ENCODE measurements at regions of chr1 and their contacts with region 1.

Region 1: DNA sequence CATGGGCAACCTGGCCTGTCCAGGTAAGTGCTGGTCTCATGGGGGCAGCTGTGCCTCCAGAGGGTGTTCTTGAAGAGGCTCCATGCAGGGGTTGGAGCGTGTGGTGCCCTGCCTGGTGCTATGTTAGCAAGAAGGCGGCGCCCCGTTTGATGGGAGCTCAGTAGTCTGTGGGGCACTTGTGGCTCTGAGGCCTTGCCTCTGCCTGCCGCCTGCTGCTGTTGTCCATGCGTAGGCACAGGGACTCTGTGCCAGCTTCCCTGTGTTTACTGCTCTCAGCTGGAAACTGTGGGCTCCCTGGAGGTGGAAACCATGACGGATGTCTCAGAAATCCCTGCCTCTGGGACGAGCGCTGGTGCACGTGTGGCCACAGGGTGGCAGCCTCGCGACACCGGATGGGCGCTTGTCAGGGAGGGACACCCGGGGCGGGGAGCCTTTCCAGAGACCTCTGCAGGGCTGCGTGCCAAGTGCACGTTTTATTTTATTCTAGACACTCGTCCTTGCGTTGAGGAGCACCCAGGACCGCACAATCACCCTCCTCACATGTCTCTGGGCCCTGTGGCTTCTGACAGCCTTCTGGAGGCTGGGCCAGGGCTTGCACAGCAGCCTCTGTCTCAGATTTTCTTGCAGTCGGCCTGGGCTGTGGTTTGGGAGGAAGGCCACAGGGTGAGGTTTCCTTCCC is 27.1 kb downstream of the SNAP47 start:
- DNase-seq: peak; percentile 79
- ATAC-seq: peak; percentile 94
- H3K4me3 ChIP-seq: no peak overlapping the region
- H3K4me3 Mint-ChIP-seq: no peak overlapping the region
- H3K27ac ChIP-seq: no peak overlapping the region
- H3K27ac Mint-ChIP-seq: no peak overlapping the region
- H3K4me1 ChIP-seq: peaks cover 3 to 23% of the 10 kb centered on the region in 2 donors
- H3K4me1 Mint-ChIP-seq: peaks cover 19% of the 10 kb centered on the region
- H3K27me3 ChIP-seq: no peaks in the 10 kb centered on the region
- H3K27me3 Mint-ChIP-seq: no peaks in the 10 kb centered on the region
- CTCF ChIP-seq: peak; percentile 89

Region 2: DNA sequence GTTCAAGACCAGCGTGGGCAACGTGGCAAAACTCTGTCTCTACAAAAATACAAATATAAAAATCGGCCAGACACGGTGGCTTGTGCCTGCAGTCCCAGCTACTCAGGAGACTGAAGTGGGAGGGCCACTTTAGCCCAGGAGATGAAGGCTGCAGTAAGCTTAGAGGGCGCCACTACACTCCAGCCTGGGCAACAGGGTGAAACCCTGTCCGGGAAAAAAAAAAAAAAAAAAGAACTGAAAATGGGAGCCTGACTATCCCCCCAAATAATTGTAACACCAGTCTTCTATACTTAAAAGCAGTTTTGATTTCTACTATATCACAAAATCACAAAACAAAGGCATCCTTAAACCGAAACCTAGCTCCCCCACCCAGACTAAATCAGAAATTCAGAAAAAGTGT is 504.4 kb before region 1 on chr1:
- CTCF ChIA-PET with region 1: no interaction called
- POLR2A ChIA-PET with region 1: no interaction called
- intact Hi-C with region 1: no loop called
- DNase-seq: no peak
- ATAC-seq: no peak
- H3K4me3 ChIP-seq: no peak overlapping the region
- H3K4me3 Mint-ChIP-seq: no peak overlapping the region
- H3K27ac ChIP-seq: no peak overlapping the region
- H3K27ac Mint-ChIP-seq: no peak overlapping the region
- H3K4me1 ChIP-seq: no peaks in the 10 kb centered on the region
- H3K4me1 Mint-ChIP-seq: no peaks in the 10 kb centered on the region
- H3K27me3 ChIP-seq: no peaks in the 10 kb centered on the region
- H3K27me3 Mint-ChIP-seq: no peaks in the 10 kb centered on the region
- CTCF ChIP-seq: no peak

Region 3: DNA sequence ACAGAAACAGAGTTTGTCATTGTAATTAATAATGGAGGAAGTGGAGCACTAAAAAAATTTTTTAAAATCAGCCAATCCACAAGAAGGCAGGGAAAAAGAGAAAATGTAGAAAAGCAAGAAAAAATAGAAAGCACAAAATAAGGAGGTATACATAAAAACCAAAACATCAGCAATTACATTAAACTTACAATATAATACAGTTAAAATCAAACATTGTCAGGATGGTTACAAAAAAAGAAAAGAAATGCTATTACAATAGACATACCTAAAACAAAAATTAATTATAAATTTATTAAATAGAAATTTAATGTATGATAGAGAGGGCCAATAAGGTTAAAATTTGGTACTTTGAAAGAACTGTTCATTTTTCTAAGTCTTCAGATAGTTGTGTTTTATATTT is 91.8 kb after region 1 on chr1:
- CTCF ChIA-PET with region 1: no interaction called
- POLR2A ChIA-PET with region 1: no interaction called
- intact Hi-C with region 1: no loop called
- DNase-seq: no peak
- ATAC-seq: no peak
- H3K4me3 ChIP-seq: no peak overlapping the region
- H3K4me3 Mint-ChIP-seq: no peak overlapping the region
- H3K27ac ChIP-seq: no peak overlapping the region
- H3K27ac Mint-ChIP-seq: no peak overlapping the region
- H3K4me1 ChIP-seq: no peaks in the 10 kb centered on the region
- H3K4me1 Mint-ChIP-seq: no peaks in the 10 kb centered on the region
- H3K27me3 ChIP-seq: no peaks in the 10 kb centered on the region
- H3K27me3 Mint-ChIP-seq: peaks cover 16% of the 10 kb centered on the region
- CTCF ChIP-seq: no peak

Region 4: DNA sequence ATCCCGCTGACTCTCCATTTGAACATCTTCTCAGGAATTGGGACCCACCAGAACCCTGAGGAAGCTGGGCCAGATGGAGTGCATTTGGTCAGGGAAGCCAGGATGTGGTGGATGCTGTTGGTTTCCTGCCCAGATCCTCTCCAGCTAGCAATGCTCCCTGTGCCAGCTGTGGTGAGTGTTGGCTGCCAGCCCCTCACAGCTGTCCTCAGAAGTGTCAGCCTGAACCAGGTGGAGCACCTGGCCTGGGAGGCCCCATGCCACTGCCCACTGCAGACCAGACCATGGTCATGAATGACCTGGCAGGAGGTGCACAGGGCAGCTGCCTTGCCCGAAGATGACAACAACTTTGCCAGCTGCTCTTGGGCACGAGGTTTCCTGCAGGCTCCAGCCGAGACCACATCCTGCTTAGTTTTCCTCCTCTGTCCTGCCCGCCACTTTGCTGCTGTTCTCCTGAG is 107.5 kb after region 1 on chr1:
- CTCF ChIA-PET with region 1: no interaction called
- POLR2A ChIA-PET with region 1: no interaction called
- intact Hi-C with region 1: no loop called
- DNase-seq: no peak
- ATAC-seq: no peak
- H3K4me3 ChIP-seq: no peak overlapping the region
- H3K4me3 Mint-ChIP-seq: no peak overlapping the region
- H3K27ac ChIP-seq: no peak overlapping the region
- H3K27ac Mint-ChIP-seq: no peak overlapping the region
- H3K4me1 ChIP-seq: no peaks in the 10 kb centered on the region
- H3K4me1 Mint-ChIP-seq: no peaks in the 10 kb centered on the region
- H3K27me3 ChIP-seq: peaks cover 0 to 14% (median 0%) of the 10 kb centered on the region in 4 experiments
- H3K27me3 Mint-ChIP-seq: peaks cover 25% of the 10 kb centered on the region
- CTCF ChIP-seq: no peak

Region 5: GRCh38 chr1:227946624-227947385 is 184.4 kb after region 1 on chr1:
- CTCF ChIA-PET with region 1: interaction called, 45 read pairs
- POLR2A ChIA-PET with region 1: no interaction called
- intact Hi-C with region 1: no loop called
- DNase-seq: peak; percentile 51
- ATAC-seq: peak; percentile 37
- H3K4me3 ChIP-seq: peak overlapping the region in 4 of 5 experiments; percentile 11 to 33 (median 16)
- H3K4me3 Mint-ChIP-seq: peak overlapping the region; percentile 71
- H3K27ac ChIP-seq: no peak overlapping the region
- H3K27ac Mint-ChIP-seq: no peak overlapping the region
- H3K4me1 ChIP-seq: peaks cover 15 to 21% of the 10 kb centered on the region in 2 donors
- H3K4me1 Mint-ChIP-seq: peaks cover 12% of the 10 kb centered on the region
- H3K27me3 ChIP-seq: peaks cover 0 to 37% (median 8%) of the 10 kb centered on the region in 4 experiments
- H3K27me3 Mint-ChIP-seq: peaks cover 27% of the 10 kb centered on the region
- CTCF ChIP-seq: peak; percentile 44

Region 6: DNA sequence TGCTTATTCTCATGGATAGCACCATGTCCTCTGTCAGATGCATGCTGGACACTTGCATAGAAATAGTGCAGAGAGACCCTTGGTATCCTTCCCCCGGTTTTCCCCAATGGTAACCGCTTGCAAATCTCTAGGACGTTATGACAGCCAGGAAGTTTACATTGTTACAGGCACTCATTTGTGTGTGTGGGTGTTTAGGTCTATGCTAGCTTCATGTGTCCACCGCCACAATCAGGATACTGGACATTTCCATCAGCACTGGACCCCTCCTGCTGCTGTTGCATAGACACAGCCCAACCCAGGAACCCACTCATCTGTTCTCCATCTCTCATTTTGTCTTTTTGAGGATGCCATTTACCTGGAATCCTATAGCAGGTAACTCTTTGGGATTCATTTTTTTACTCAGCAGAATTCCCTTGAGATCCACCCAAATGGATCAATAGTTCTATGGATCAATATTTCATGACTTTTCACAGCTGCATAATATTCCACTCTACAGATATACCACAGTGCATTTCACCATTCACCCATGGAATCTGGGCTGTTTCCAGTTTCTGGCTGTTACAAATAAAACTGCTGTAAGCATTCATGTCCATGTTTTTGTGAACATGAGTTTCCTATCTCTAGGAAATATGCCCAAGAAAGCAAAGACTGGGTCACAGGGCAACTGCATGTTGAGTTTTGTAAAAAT is 191.9 kb after region 1 on chr1:
- CTCF ChIA-PET with region 1: interaction called, 45 read pairs
- POLR2A ChIA-PET with region 1: no interaction called
- intact Hi-C with region 1: loop called (anchors 1 kb)
- DNase-seq: no peak
- ATAC-seq: no peak
- H3K4me3 ChIP-seq: no peak overlapping the region
- H3K4me3 Mint-ChIP-seq: no peak overlapping the region
- H3K27ac ChIP-seq: no peak overlapping the region
- H3K27ac Mint-ChIP-seq: no peak overlapping the region
- H3K4me1 ChIP-seq: no peaks in the 10 kb centered on the region
- H3K4me1 Mint-ChIP-seq: no peaks in the 10 kb centered on the region
- H3K27me3 ChIP-seq: peaks cover 0 to 17% (median 5%) of the 10 kb centered on the region in 4 experiments
- H3K27me3 Mint-ChIP-seq: peaks cover 48% of the 10 kb centered on the region
- CTCF ChIP-seq: no peak

Measured in B cell (primary cell).